GM12878 (cell line): ENCODE measurements at regions of chr3 and their contacts with region 1.

Region 1: GRCh38 chr3:34742151-34742550 is 897.2 kb upstream of the ARPP21 start:
- DNase-seq: no peak
- ATAC-seq: no peak
- H3K4me3 ChIP-seq: no peak overlapping the region
- H3K27ac ChIP-seq: no peak overlapping the region
- H3K4me1 ChIP-seq: no peaks in the 10 kb centered on the region
- H3K27me3 ChIP-seq: no peaks in the 10 kb centered on the region
- CTCF ChIP-seq: no peak
- EP300 ChIP-seq: no peak
- POLR2A ChIP-seq: no peak
- RAD21 ChIP-seq: no peak

Region 2: DNA sequence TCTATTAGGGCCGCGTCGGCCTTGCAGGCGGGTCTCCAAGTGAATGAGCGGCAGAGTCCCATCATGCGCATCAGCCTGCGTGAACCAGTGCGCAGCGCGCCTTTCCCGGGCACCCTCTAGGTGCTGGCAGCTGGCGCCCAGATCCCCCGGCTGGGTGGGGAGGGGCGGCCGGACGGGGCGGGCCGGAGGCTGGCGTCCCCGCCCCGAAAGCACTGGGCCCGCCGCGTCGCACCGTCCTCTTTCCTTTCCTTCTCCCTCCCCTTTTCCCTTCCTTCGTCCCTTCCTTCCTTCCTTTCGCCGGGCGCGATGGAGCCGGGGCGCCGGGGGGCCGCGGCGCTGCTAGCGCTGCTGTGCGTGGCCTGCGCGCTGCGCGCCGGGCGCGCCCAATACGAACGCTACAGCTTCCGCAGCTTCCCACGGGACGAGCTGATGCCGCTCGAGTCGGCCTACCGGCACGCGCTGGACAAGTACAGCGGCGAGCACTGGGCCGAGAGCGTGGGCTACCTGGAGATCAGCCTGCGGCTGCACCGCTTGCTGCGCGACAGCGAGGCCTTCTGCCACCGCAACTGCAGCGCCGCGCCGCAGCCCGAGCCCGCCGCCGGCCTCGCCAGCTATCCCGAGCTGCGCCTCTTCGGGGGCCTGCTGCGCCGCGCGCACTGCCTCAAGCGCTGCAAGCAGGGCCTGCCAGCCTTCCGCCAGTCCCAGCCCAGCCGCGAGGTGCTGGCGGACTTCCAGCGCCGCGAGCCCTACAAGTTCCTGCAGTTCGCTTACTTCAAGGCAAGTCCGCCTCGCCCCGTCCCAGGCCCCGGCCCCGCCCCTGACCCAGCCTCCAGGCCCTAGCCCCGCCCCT is 1628.2 kb before region 1 on chr3 and contains the start of gene CRTAP:
- CTCF ChIA-PET with region 1: no interaction called
- POLR2A ChIA-PET with region 1: interaction called, 10 read pairs
- RAD21 ChIA-PET with region 1: no interaction called
- SMC1A ChIA-PET with region 1: no interaction called
- in situ Hi-C with region 1: no loop called
- intact Hi-C with region 1: no loop called
- DNase-seq: peak; percentile 45
- ATAC-seq: peak; percentile 92
- H3K4me3 ChIP-seq: peak within 1 kb of the TSS; percentile 75
- H3K27ac ChIP-seq: peak within 1 kb of the TSS; percentile 43
- H3K4me1 ChIP-seq: peaks cover 24% of the 10 kb centered on the region
- H3K27me3 ChIP-seq: no peaks in the 10 kb centered on the region
- CTCF ChIP-seq: no peak
- EP300 ChIP-seq: no peak
- POLR2A ChIP-seq: peak; percentile 87
- RAD21 ChIP-seq: no peak
- polyA plus RNA-seq, gene CRTAP: 6.0 to 6.2 TPM